Endothelial cell of umbilical vein (primary cell): ENCODE measurements at regions of chr13 and their contacts with region 1.

Region 1: DNA sequence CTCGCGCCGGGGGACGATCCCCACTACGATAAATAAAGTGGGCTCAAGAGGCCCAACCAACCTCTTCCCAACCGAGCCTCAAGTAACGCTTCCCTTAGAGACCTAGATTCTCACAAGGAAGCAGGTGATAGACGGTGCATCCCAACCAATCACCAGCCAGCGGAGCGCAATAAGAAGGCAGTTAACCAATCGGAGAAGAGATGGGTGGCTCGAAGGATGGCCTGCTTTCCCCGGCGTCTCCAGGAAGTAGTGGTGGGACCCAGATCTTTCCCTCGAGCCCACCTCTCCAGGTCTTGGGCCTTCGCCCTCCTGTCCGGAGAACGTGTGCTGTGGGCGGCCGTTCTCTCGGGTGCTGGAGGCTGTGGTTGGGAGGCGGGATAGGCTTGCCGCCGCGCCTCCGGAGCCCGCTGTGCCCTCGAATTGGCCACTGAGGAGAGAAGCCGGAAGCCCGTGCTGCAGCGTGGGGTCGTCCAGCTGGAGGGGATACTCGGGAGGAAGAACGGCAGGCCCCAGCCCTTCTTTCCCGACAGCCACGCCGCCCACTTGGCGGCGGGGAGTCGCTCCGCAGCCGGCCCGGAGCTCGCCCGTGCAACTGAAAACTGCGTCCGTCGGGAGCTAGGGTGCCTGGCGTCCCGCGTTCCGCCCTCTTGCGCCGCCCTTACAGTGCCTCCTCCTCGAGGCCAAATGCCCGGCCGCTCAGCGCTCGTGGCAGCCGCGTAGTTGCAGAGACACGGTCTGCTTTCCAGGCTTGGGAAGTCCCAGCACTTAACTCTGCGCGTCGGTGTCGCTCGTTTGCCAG is at the start of gene RNF6:
- DNase-seq: peak; percentile 98
- H3K4me3 ChIP-seq: peak within 1 kb of the TSS; percentile 51 to 98 (median 79)
- H3K27ac ChIP-seq: peak within 1 kb of the TSS; percentile 89
- H3K4me1 ChIP-seq: peaks cover 21% of the 10 kb centered on the region
- H3K27me3 ChIP-seq: peaks cover 0 to 10% of the 10 kb centered on the region in 2 experiments
- CTCF ChIP-seq: no peak
- POLR2A ChIP-seq: peak; percentile 75
- total RNA-seq, gene RNF6: 36.4 and 38.3 TPM in 2 replicates

Region 2: GRCh38 chr13:26011996-26012821 is 209.7 kb before region 1 on chr13:
- CTCF ChIA-PET with region 1: no interaction called
- POLR2A ChIA-PET with region 1: no interaction called
- dilution Hi-C with region 1: no loop called
- intact Hi-C with region 1: loop called (anchors 10 kb)
- DNase-seq: no peak
- H3K4me3 ChIP-seq: peak overlapping the region in 1 of 3 experiments; percentile 19
- H3K27ac ChIP-seq: no peak overlapping the region
- H3K4me1 ChIP-seq: peaks cover 46% of the 10 kb centered on the region
- H3K27me3 ChIP-seq: no peaks in the 10 kb centered on the region
- CTCF ChIP-seq: no peak
- POLR2A ChIP-seq: no peak

Region 3: DNA sequence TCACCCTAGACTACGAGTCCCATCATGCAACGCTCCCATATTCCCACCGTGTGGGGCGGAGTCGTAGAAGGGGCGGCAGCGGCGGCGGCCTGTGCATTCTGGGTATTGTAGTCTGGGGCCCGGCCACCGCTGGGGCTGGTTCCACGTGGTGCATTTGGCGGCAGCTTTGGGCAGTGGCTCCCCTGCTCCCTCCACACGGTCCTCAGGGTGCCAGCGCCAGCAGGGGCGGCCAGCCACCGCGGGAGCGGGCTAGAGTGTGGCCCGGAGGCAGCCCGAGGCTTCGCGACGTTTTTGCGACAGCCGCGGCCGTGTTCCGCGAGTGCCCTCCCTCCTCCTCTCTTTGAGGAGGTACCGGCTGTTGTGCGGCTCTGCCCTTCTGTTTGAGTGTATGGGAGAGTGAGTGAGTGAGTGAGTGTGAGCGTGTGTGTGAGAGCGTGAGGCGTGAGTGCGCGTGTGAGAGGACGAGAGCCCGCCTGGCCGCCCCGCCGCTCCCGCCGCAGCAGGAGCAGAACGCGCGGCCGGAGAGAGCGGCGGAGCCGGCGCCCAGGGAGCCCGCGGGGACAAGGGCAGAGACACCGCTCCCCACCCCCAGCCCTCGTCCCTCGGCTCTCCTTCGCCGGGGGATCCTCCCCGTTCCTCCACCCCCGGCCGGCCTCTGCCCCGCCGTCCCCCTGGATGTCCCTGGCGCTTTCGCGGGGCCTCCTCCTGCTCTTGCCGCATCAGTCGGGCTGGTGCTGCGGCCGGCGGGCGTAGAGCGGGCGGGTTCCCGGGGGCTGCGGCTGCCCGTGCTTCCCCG is 32.1 kb after region 1 on chr13 and contains the start of gene CDK8:
- CTCF ChIA-PET with region 1: no interaction called
- POLR2A ChIA-PET with region 1: no interaction called
- dilution Hi-C with region 1: no loop called
- intact Hi-C with region 1: loop called (anchors 1 kb)
- DNase-seq: peak; percentile 89
- H3K4me3 ChIP-seq: peak within 1 kb of the TSS; percentile 65 to 95 (median 71)
- H3K27ac ChIP-seq: peak within 1 kb of the TSS; percentile 75
- H3K4me1 ChIP-seq: peaks cover 18% of the 10 kb centered on the region
- H3K27me3 ChIP-seq: peaks cover 6 to 15% of the 10 kb centered on the region in 2 experiments
- CTCF ChIP-seq: no peak
- POLR2A ChIP-seq: no peak
- total RNA-seq, gene CDK8: 11.9 and 13.3 TPM in 2 replicates

Region 4: DNA sequence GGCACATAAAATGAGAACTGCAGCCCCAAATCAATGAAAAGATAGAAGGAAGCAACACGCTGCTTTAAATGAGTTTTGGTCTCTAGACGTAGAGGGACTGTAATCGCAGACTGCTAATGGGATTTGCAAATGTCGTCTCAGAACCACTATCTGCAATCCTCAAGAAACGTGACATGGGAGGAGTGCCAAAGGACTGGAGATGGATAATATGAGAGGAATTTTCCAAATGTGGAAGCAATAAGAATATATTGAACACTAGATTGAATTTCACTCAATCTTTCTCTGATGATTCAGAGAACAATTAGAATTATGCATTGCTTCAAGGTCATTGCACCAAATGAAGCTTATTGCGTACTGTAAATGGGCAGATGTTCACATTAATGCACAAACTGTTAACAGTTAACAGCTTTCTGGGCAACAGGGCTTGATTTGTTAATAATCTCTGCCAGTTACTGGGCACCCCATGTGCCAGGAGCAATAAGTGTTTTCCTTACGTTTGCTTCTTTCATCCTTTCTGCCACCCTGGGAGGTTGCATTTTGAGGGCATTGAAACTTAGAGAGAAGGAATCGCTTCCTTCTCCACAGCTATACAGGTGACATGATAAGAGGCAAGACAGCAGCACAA is 272.8 kb after region 1 on chr13:
- CTCF ChIA-PET with region 1: interaction called, 3 read pairs
- POLR2A ChIA-PET with region 1: interaction called, 4 read pairs
- dilution Hi-C with region 1: no loop called
- intact Hi-C with region 1: loop called (anchors 1 kb)
- DNase-seq: no peak
- H3K4me3 ChIP-seq: no peak overlapping the region
- H3K27ac ChIP-seq: no peak overlapping the region
- H3K4me1 ChIP-seq: peaks cover 7% of the 10 kb centered on the region
- H3K27me3 ChIP-seq: peaks cover 5 to 7% of the 10 kb centered on the region in 2 experiments
- CTCF ChIP-seq: no peak
- POLR2A ChIP-seq: no peak